GM12878 (cell line): ENCODE measurements at regions of chrX and their contacts with region 1.

Region 1: GRCh38 chrX:66698273-66699204 is 59.7 kb upstream of the EDA2R start:
- DNase-seq: no peak
- ATAC-seq: peak; percentile 44
- H3K4me3 ChIP-seq: no peak overlapping the region
- H3K27ac ChIP-seq: no peak overlapping the region
- H3K4me1 ChIP-seq: no peaks in the 10 kb centered on the region
- H3K27me3 ChIP-seq: no peaks in the 10 kb centered on the region
- CTCF ChIP-seq: no peak
- EP300 ChIP-seq: no peak
- POLR2A ChIP-seq: no peak
- RAD21 ChIP-seq: no peak

Region 2: GRCh38 chrX:66638591-66639500 is 59.7 kb before region 1 on chrX and contains the start of gene EDA2R:
- CTCF ChIA-PET with region 1: no interaction called
- POLR2A ChIA-PET with region 1: no interaction called
- RAD21 ChIA-PET with region 1: no interaction called
- SMC1A ChIA-PET with region 1: no interaction called
- in situ Hi-C with region 1: no loop called
- intact Hi-C with region 1: loop called (anchors 10 kb)
- DNase-seq: peak; percentile 60
- ATAC-seq: peak; percentile 90
- H3K4me3 ChIP-seq: peak within 1 kb of the TSS; percentile 68
- H3K27ac ChIP-seq: peak within 1 kb of the TSS; percentile 60
- H3K4me1 ChIP-seq: no peaks in the 10 kb centered on the region
- H3K27me3 ChIP-seq: no peaks in the 10 kb centered on the region
- CTCF ChIP-seq: no peak
- EP300 ChIP-seq: no peak
- POLR2A ChIP-seq: peak; percentile 46
- RAD21 ChIP-seq: no peak
- polyA plus RNA-seq, gene EDA2R: 3.3 to 3.5 TPM